GM12878 (cell line): ENCODE measurements at regions of chr9 and their contacts with region 1.

Region 1: GRCh38 chr9:3441197-3441816 is 84.5 kb downstream of the RFX3 start:
- DNase-seq: peak; percentile 24
- ATAC-seq: peak; percentile 99
- H3K4me3 ChIP-seq: no peak overlapping the region
- H3K27ac ChIP-seq: no peak overlapping the region
- H3K4me1 ChIP-seq: no peaks in the 10 kb centered on the region
- H3K27me3 ChIP-seq: no peaks in the 10 kb centered on the region
- CTCF ChIP-seq: peak; percentile 40 to 72 (median 72)
- EP300 ChIP-seq: no peak
- POLR2A ChIP-seq: no peak
- RAD21 ChIP-seq: peak; percentile 76

Region 2: GRCh38 chr9:2933165-2934095 is 507.9 kb before region 1 on chr9:
- CTCF ChIA-PET with region 1: no interaction called
- POLR2A ChIA-PET with region 1: no interaction called
- RAD21 ChIA-PET with region 1: no interaction called
- SMC1A ChIA-PET with region 1: no interaction called
- in situ Hi-C with region 1: no loop called
- intact Hi-C with region 1: no loop called
- DNase-seq: no peak
- ATAC-seq: no peak
- H3K4me3 ChIP-seq: no peak overlapping the region
- H3K27ac ChIP-seq: no peak overlapping the region
- H3K4me1 ChIP-seq: no peaks in the 10 kb centered on the region
- H3K27me3 ChIP-seq: no peaks in the 10 kb centered on the region
- CTCF ChIP-seq: no peak
- EP300 ChIP-seq: no peak
- POLR2A ChIP-seq: no peak
- RAD21 ChIP-seq: no peak

Region 3: GRCh38 chr9:3224931-3225330 is 216.4 kb before region 1 on chr9:
- CTCF ChIA-PET with region 1: interaction called, 5 read pairs
- POLR2A ChIA-PET with region 1: no interaction called
- RAD21 ChIA-PET with region 1: interaction called, 4 read pairs
- SMC1A ChIA-PET with region 1: interaction called, 11 read pairs
- in situ Hi-C with region 1: no loop called
- intact Hi-C with region 1: no loop called
- DNase-seq: no peak
- ATAC-seq: no peak
- H3K4me3 ChIP-seq: no peak overlapping the region
- H3K27ac ChIP-seq: no peak overlapping the region
- H3K4me1 ChIP-seq: no peaks in the 10 kb centered on the region
- H3K27me3 ChIP-seq: no peaks in the 10 kb centered on the region
- CTCF ChIP-seq: no peak
- EP300 ChIP-seq: no peak
- POLR2A ChIP-seq: no peak
- RAD21 ChIP-seq: no peak

Region 4: GRCh38 chr9:3250741-3251140 is 190.6 kb before region 1 on chr9:
- CTCF ChIA-PET with region 1: interaction called, 8 read pairs
- POLR2A ChIA-PET with region 1: no interaction called
- RAD21 ChIA-PET with region 1: interaction called, 6 read pairs
- SMC1A ChIA-PET with region 1: interaction called, 136 read pairs
- in situ Hi-C with region 1: no loop called
- intact Hi-C with region 1: no loop called
- DNase-seq: no peak
- ATAC-seq: no peak
- H3K4me3 ChIP-seq: no peak overlapping the region
- H3K27ac ChIP-seq: no peak overlapping the region
- H3K4me1 ChIP-seq: peaks cover under 1% of the 10 kb centered on the region; the same call in 1 of the 2 replicates
- H3K27me3 ChIP-seq: no peaks in the 10 kb centered on the region
- CTCF ChIP-seq: no peak
- EP300 ChIP-seq: no peak
- POLR2A ChIP-seq: no peak
- RAD21 ChIP-seq: no peak

Region 5: DNA sequence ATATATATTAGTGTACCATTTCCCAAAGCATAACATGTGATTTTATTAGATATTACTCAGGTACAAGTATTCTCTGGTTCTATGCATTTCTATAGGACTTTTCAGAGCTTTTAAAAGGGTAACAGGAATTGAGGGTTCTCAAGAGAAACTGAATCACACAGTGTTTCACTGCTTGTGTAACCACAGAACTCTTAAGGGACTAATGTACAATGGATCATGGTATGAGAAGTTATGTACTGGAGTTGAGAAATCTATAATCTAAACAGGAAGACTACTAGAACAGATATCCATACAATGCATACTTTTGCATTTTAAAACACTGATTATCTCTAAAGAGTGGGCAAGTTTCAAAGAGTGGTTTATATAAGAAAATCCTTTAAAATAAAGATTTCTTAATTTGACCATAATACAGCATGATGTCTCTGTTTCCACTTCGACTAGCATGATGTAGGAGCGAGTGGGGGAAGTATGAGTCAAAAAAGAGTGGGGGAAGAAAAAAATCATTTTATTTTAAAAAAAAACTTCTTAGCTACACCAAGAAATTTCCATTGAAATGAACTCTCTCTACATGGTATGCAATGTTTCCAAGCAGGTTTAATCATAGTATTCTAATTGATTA is 99.0 kb before region 1 on chr9:
- CTCF ChIA-PET with region 1: interaction called, 13 read pairs
- POLR2A ChIA-PET with region 1: no interaction called
- RAD21 ChIA-PET with region 1: interaction called, 7 read pairs
- SMC1A ChIA-PET with region 1: interaction called, 4 read pairs
- in situ Hi-C with region 1: no loop called
- intact Hi-C with region 1: no loop called
- DNase-seq: no peak
- ATAC-seq: peak; percentile 41; the same call in 2 of the 3 replicates
- H3K4me3 ChIP-seq: no peak overlapping the region
- H3K27ac ChIP-seq: no peak overlapping the region
- H3K4me1 ChIP-seq: no peaks in the 10 kb centered on the region
- H3K27me3 ChIP-seq: no peaks in the 10 kb centered on the region
- CTCF ChIP-seq: no peak
- EP300 ChIP-seq: no peak
- POLR2A ChIP-seq: no peak
- RAD21 ChIP-seq: no peak

Region 6: DNA sequence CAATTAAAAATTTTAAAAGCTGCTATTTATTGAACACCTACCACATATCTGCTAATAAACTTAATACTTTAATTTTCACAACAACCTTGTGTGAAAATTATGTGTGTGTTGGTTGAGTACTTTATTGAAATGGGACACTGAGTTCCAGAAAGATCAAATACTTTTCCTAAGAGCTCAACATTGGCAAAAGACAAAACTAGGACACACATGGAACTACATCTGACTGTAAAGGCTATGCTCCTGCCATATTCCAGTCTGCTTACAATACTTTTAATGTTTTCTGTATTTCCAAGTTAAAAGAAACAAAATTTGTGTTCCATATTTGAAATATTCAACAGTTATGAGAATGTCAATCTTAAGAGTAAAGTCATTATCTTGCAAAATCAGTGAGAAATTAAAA is 27.3 kb before region 1 on chr9:
- CTCF ChIA-PET with region 1: interaction called, 16 read pairs
- POLR2A ChIA-PET with region 1: no interaction called
- RAD21 ChIA-PET with region 1: interaction called, 7 read pairs
- SMC1A ChIA-PET with region 1: interaction called, 7 read pairs
- in situ Hi-C with region 1: no loop called
- intact Hi-C with region 1: no loop called
- DNase-seq: no peak
- ATAC-seq: no peak
- H3K4me3 ChIP-seq: no peak overlapping the region
- H3K27ac ChIP-seq: no peak overlapping the region
- H3K4me1 ChIP-seq: no peaks in the 10 kb centered on the region
- H3K27me3 ChIP-seq: no peaks in the 10 kb centered on the region
- CTCF ChIP-seq: no peak
- EP300 ChIP-seq: no peak
- POLR2A ChIP-seq: no peak
- RAD21 ChIP-seq: no peak

Region 7: DNA sequence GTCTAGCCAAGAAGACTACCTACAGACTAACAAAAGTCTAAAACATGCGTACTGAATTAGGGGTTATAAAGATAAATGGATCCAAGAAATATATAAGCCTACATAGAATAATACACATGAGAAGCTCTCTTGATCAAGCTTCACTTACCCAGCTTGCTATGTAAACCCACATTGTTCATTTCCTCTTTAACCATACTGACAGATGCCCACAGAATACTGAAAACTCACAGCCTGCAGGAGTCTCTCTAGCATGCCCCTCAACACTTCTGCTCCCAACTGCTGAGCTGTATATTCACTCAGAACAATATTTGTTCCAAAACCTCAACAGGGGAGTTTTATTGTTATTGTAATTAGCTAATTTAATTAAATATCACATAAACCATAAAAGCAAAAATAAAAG is 32.1 kb after region 1 on chr9:
- CTCF ChIA-PET with region 1: interaction called, 5 read pairs
- POLR2A ChIA-PET with region 1: interaction called, 5 read pairs
- RAD21 ChIA-PET with region 1: interaction called, 13 read pairs
- SMC1A ChIA-PET with region 1: interaction called, 3 read pairs
- in situ Hi-C with region 1: no loop called
- intact Hi-C with region 1: no loop called
- DNase-seq: no peak
- ATAC-seq: peak; percentile 64
- H3K4me3 ChIP-seq: no peak overlapping the region
- H3K27ac ChIP-seq: peak overlapping the region; percentile 40
- H3K4me1 ChIP-seq: peaks cover 37% of the 10 kb centered on the region
- H3K27me3 ChIP-seq: no peaks in the 10 kb centered on the region
- CTCF ChIP-seq: peak in 1 of 3 experiments; percentile 32; a peak in 1 of 6 replicates
- EP300 ChIP-seq: no peak
- POLR2A ChIP-seq: no peak
- RAD21 ChIP-seq: peak; percentile 33; the same call in 1 of the 2 replicates

Region 8: GRCh38 chr9:3929345-3930047 is 488.2 kb after region 1 on chr9:
- CTCF ChIA-PET with region 1: no interaction called
- POLR2A ChIA-PET with region 1: no interaction called
- RAD21 ChIA-PET with region 1: no interaction called
- SMC1A ChIA-PET with region 1: no interaction called
- in situ Hi-C with region 1: no loop called
- intact Hi-C with region 1: no loop called
- DNase-seq: no peak
- ATAC-seq: no peak
- H3K4me3 ChIP-seq: no peak overlapping the region
- H3K27ac ChIP-seq: no peak overlapping the region
- H3K4me1 ChIP-seq: no peaks in the 10 kb centered on the region
- H3K27me3 ChIP-seq: no peaks in the 10 kb centered on the region; a peak in 1 of 4 replicates
- CTCF ChIP-seq: no peak
- EP300 ChIP-seq: no peak
- POLR2A ChIP-seq: no peak
- RAD21 ChIP-seq: no peak